GM10248 (cell line): ENCODE measurements at regions of chr12 and their contacts with region 1.

Region 1: GRCh38 chr12:40032433-40033241 is 73.2 kb downstream of the SLC2A13 start:
- DNase-seq: no peak
- CTCF ChIP-seq: no peak

Region 2: DNA sequence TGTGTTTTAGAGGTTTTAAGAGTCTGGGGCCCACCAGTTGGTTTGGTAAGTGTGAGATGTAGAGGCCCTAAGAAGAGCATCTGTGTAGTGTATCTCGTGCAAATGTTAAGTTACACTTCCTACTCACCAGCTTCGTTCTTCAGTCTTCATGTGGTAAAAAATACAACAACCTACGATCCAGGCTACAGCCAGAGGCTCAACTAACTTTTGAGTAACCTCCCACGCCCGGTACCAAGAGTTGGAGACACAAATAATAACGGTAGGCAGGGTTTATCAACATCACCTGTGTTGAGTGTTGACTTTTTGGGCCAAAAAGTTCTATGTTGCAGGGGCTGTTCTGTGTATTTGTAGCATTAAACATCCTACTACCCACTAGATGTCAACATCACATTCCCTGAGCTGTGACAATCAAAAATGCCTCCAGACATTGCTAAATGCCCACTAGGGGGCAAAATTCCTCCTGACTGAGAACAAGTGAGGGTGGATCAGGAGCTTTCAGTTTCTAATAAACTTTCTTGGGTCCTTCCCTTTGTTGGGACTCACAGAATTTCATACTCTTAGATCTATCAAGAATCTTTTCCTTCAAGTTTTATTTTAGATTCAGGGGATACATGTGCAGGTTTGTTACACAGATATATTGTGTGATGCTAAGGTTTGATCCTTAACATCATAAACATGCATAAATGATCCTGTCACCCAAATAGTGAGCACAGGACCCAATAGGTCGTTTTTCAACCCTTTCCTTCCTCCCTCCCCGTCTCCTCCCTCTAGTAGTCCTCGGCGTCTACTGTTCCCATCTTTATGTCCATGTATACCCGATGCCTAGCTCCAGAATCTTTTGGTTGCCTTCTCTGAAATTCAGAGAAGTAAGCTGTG is 21.5 kb before region 1 on chr12:
- CTCF ChIA-PET with region 1: interaction called, 15 read pairs
- POLR2A ChIA-PET with region 1: no interaction called
- DNase-seq: peak; percentile 54
- CTCF ChIP-seq: peak; percentile 81

Region 3: DNA sequence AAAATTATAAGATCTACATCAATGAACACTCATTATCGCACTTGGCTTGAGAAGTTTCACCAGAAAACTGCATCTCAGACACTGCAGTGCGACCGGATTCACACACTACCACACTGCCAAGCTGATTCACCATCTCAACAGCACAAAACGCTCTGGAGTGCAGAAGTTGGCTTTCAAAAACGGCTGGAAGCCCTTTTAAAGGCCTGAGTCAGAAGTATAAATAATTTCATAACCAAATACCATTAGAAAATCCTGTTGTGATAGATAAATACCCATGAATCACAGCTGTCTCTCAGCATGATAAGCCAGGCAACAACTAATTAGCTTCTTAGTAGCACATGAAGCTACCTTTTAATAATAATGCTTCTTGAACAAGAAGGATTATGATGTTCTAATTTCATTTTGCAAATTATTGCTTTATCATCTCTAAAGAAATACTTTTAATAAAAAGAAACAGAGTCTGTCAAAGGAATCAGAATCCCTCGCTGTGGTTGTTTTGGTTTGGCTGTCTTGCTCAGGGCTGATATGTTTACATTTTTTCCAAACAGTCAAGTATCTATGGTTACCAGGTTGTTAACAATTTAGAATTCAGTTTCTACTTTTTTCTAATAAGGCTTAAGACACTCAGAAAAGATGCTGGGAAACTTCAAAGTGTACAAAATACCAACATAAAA is 22.1 kb after region 1 on chr12:
- CTCF ChIA-PET with region 1: no interaction called
- POLR2A ChIA-PET with region 1: no interaction called
- DNase-seq: no peak
- CTCF ChIP-seq: no peak